ENCODE measurements at regions of chr19 and their contacts with region 1.

Region 1: GRCh38 chr19:5154129-5154798 is 185.4 kb downstream of the KDM4B start:
- DNase-seq: peak in 2 of 3 donors; percentile 39 to 53
- H3K4me3 ChIP-seq: no peak overlapping the region
- H3K27ac ChIP-seq: no peak overlapping the region
- H3K4me1 ChIP-seq: no peaks in the 10 kb centered on the region
- H3K27me3 ChIP-seq: no peaks in the 10 kb centered on the region

Region 2: DNA sequence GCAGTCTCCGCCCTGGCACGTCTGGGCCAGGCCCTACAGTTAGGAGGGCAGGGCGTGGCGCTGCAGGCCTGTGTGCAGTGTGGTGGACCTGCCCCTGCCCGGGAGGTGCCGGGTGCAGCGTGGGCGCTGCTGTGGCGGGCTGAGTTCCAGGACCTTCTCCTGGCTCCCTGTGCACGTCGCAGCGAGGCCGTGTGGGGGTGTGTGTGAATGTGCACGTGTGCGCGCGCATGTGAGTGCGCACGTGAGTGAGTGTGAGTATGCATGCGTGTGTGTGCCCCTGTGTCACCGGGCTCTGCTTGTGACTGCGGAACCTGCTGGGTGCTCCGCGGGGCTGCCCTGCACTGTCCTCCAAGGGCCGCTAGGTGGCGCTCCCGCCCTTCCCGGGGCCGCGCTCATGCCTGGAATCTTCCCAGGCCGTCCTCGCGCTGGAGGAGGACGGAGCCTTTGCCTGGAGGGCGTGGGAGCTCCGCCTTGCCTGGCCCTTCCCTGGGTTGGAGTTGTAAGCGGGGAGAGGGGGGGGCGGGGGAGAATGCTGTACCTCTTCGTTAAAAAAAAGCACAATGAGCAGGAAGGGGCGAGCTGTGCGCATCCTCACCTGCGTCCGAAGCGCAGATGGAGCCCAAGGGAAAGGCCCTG is 106.1 kb before region 1 on chr19:
- CTCF ChIA-PET with region 1: interaction called, 32 read pairs
- POLR2A ChIA-PET with region 1: no interaction called
- DNase-seq: peak; percentile 36 to 60 (median 56)
- H3K4me3 ChIP-seq: no peak overlapping the region
- H3K27ac ChIP-seq: no peak overlapping the region
- H3K4me1 ChIP-seq: peaks cover 0 to 3% (median 0%) of the 10 kb centered on the region in 4 experiments
- H3K27me3 ChIP-seq: no peaks in the 10 kb centered on the region

Region 3: GRCh38 chr19:5200844-5201243 is 46.6 kb after region 1 on chr19:
- CTCF ChIA-PET with region 1: no interaction called
- POLR2A ChIA-PET with region 1: no interaction called
- DNase-seq: peak in 1 of 3 donors; percentile 12
- H3K4me3 ChIP-seq: no peak overlapping the region
- H3K27ac ChIP-seq: no peak overlapping the region
- H3K4me1 ChIP-seq: peaks cover 0 to 12% (median 0%) of the 10 kb centered on the region in 4 experiments
- H3K27me3 ChIP-seq: no peaks in the 10 kb centered on the region

Measured in common myeloid progenitor, CD34-positive (primary cell).